ENCODE measurements at regions of chr15 and their contacts with region 1.

Region 1: GRCh38 chr15:56760186-56760585 is 26.9 kb upstream of the ZNF280D start:
- DNase-seq: no peak
- ATAC-seq: no peak
- H3K4me3 Mint-ChIP-seq: no peak overlapping the region
- H3K27ac Mint-ChIP-seq: no peak overlapping the region
- H3K4me1 Mint-ChIP-seq: peaks cover 5% of the 10 kb centered on the region
- H3K27me3 Mint-ChIP-seq: no peaks in the 10 kb centered on the region
- CTCF ChIP-seq: no peak

Region 2: DNA sequence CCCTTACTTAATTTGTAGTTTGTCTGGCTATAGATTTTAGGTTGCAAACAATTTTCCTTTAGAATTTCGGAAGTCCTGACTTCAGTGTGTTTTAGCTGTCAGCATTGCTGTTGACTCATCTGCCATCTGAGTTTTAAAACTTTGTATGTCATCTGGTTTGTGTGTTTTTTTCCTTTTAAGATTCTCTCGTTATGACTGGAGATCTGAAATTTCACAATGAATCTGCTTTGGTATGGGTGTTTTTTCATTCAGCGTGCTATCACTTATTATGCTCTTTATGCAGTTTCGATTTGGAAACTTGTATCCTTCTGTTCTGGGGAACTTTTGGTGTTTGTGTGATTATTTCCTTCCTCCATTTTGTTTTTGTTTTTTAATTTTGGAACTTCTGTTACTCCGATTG is 26.8 kb after region 1 on chr15:
- CTCF ChIA-PET with region 1: no interaction called
- POLR2A ChIA-PET with region 1: no interaction called
- intact Hi-C with region 1: loop called (anchors 2 kb)
- DNase-seq: no peak
- ATAC-seq: peak; percentile 31
- H3K4me3 Mint-ChIP-seq: no peak overlapping the region
- H3K27ac Mint-ChIP-seq: no peak overlapping the region
- H3K4me1 Mint-ChIP-seq: peaks cover 6% of the 10 kb centered on the region
- H3K27me3 Mint-ChIP-seq: no peaks in the 10 kb centered on the region
- CTCF ChIP-seq: no peak

Region 3: GRCh38 chr15:56984681-56985481 is 224.7 kb after region 1 on chr15:
- CTCF ChIA-PET with region 1: no interaction called
- POLR2A ChIA-PET with region 1: no interaction called
- intact Hi-C with region 1: no loop called
- DNase-seq: no peak
- ATAC-seq: peak; percentile 40
- H3K4me3 Mint-ChIP-seq: no peak overlapping the region
- H3K27ac Mint-ChIP-seq: peak overlapping the region; percentile 75
- H3K4me1 Mint-ChIP-seq: peaks cover 57% of the 10 kb centered on the region
- H3K27me3 Mint-ChIP-seq: no peaks in the 10 kb centered on the region
- CTCF ChIP-seq: no peak